ENCODE measurements at regions of chr3 and their contacts with region 1.

Region 1: DNA sequence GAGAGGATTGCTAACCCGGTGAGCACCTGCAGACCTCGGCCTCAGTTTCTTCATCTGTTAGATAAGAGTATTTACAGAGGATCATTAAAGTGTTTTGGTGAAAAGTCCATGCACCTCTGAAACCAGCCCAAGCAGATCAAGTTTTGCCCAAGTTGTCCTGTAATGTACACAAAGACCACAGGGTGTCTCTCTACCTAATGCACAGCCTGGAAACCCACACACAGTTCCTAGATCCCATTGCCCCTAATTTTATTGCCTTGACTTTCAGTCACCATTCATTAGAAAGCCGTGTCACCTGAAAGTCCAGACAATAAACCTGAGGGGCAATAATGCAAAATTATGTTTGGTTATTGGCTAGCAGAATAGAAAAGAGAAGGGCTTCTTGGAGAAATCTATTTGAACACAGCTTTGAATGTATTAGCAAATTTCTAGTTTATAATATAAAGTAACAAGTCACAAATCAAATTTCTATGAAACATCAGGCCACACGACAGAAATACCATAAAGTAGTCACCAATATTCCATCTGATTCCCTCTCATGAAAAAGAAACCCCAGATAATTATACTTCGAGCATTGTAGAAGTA is 161.3 kb upstream of the SLC2A2 start:
- DNase-seq: peak; percentile 22
- CTCF ChIP-seq: peak; percentile 37

Region 2: GRCh38 chr3:171328419-171329082 is 140.8 kb after region 1 on chr3:
- in situ Hi-C with region 1: no loop called
- DNase-seq: no peak
- CTCF ChIP-seq: no peak

Region 3: DNA sequence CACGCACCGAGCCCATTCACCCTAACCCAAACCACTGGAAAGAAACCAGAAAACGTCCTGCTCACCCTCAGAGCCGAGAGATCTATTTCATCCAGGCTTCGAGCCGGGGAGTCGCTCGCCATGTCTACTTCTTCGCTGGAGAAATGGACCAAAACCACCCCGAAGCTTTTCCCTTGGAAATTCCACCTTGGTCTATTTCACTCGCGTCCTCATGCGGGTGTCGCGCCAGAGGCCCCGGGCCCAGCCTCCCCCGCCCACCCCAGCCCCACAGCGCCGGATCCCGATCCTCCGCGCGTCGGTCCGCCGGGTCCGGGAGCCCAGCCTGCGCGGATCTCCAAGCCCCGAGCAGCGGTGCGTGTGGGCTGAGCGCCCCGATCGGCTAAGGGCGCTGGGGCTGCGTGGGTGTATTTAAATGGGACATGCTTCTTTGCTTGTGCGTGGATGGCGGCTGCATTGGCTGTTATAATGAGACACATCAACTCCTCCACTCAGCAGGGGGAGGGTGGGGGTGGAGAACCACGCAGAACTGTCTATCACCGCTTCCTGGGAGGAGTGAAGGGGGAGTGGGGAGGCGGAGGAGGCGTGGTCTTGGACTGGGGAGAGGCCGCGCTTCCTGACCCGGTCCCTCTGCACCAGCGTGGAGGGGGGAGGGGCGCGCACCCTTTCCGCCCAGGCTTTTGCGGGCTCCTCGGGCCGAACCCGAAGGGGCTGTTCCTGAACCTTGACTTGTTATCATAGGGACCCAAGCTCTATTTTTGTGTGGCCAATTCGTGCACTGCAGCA is 272.3 kb after region 1 on chr3 and contains the start of gene TNIK:
- in situ Hi-C with region 1: loop called (anchors 10 kb)
- DNase-seq: peak; percentile 93
- CTCF ChIP-seq: no peak

Region 4: GRCh38 chr3:171566803-171567422 is 379.1 kb after region 1 on chr3:
- in situ Hi-C with region 1: loop called (anchors 10 kb)
- DNase-seq: peak; percentile 48
- CTCF ChIP-seq: peak; percentile 52

Measured in GM13976 (cell line).